Heart left ventricle (tissue), 16 donors: ENCODE measurements at regions of chr3 and their contacts with region 1.

Region 1: DNA sequence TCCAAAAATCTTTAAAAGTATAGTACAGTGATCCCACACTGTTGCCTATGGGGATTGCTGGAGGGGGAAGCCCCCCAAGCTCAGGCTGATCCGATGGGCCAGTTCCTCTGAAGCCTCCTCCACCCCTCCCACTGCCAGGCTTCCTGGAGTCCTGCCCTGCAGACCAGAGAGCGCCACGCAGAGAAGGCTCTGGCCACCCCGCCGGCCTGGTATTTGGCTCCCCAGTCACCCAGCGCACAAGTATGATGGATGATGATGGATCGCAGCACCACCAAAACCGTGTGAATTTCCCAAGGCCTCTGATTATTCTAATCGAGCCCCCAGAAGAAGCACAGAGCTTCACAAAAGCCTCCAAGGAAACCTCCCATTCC is 259.0 kb downstream of the MECOM start:
- DNase-seq: peak in 1 of 5 donors; percentile 37
- ATAC-seq: no peak
- H3K4me3 ChIP-seq: no peak overlapping the region
- H3K27ac ChIP-seq: no peak overlapping the region
- H3K4me1 ChIP-seq: peaks cover 0 to 9% (median 0%) of the 10 kb centered on the region in 12 donors
- H3K27me3 ChIP-seq: no peaks in the 10 kb centered on the region
- CTCF ChIP-seq: no peak
- POLR2A ChIP-seq: no peak

Region 2: GRCh38 chr3:169218314-169218983 is 186.1 kb before region 1 on chr3:
- intact Hi-C with region 1: loop called in 1 of 10 experiments (anchors 10 kb)
- DNase-seq: peak in 4 of 5 donors; percentile 30 to 60 (median 42)
- ATAC-seq: peak; percentile 61 to 84 (median 80)
- H3K4me3 ChIP-seq: no peak overlapping the region
- H3K27ac ChIP-seq: peak overlapping the region in 2 of 12 donors; percentile 4 to 21
- H3K4me1 ChIP-seq: peaks cover 0 to 10% (median 1%) of the 10 kb centered on the region in 12 donors
- H3K27me3 ChIP-seq: no peaks in the 10 kb centered on the region
- CTCF ChIP-seq: peak; percentile 44 to 79 (median 62)
- POLR2A ChIP-seq: no peak

Region 3: GRCh38 chr3:169354774-169355501 is 49.6 kb before region 1 on chr3:
- intact Hi-C with region 1: no loop called
- DNase-seq: no peak
- ATAC-seq: no peak
- H3K4me3 ChIP-seq: no peak overlapping the region
- H3K27ac ChIP-seq: no peak overlapping the region
- H3K4me1 ChIP-seq: peaks cover 0 to 3% (median 0%) of the 10 kb centered on the region in 12 donors
- H3K27me3 ChIP-seq: peaks cover 0 to 18% (median 0%) of the 10 kb centered on the region in 9 donors
- CTCF ChIP-seq: no peak
- POLR2A ChIP-seq: no peak